AG04450 (cell line): ENCODE measurements at regions of chr6 and their contacts with region 1.

Region 1: DNA sequence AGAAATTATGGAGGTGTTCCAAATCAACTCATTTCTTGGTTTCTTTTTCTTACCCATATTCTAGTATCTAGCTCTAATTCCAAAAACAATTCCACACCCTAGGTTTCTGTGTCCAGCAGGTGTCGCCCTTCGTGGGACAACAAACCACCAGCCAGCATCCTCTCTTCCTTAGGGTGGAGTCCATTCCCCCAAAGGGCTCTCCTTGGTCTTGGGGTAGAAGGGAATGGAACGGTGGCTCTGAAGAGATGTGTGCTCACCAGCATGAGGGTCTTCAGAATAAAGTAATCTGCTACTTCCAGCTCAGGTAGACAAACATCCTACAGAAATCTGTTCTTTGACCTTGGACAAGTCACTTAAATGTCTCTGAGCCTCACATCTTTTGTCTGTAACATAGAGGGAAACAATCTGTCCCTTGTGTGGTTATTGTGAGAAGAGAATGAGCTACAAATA is 7.2 kb downstream of the HLA-DMB start:
- DNase-seq: peak; percentile 56
- H3K4me3 ChIP-seq: no peak overlapping the region
- H3K27ac ChIP-seq: no peak overlapping the region
- H3K27me3 ChIP-seq: peaks cover 25% of the 10 kb centered on the region
- CTCF ChIP-seq: peak; percentile 82

Region 2: GRCh38 chr6:32838114-32838958 is 95.3 kb before region 1 on chr6 and contains the start of gene TAP2:
- CTCF ChIA-PET with region 1: interaction called, 15 read pairs
- POLR2A ChIA-PET with region 1: no interaction called
- DNase-seq: peak; percentile 74
- H3K4me3 ChIP-seq: peak within 1 kb of the TSS; percentile 92
- H3K27ac ChIP-seq: peak within 1 kb of the TSS; percentile 92
- H3K27me3 ChIP-seq: no peaks in the 10 kb centered on the region
- CTCF ChIP-seq: peak; percentile 96
- polyA plus RNA-seq, gene TAP2: 15.3 and 15.4 TPM in 2 replicates

Region 3: GRCh38 chr6:32885698-32886286 is 47.9 kb before region 1 on chr6:
- CTCF ChIA-PET with region 1: interaction called, 31 read pairs
- POLR2A ChIA-PET with region 1: no interaction called
- DNase-seq: no peak
- H3K4me3 ChIP-seq: no peak overlapping the region
- H3K27ac ChIP-seq: no peak overlapping the region
- H3K27me3 ChIP-seq: peaks cover 2% of the 10 kb centered on the region
- CTCF ChIP-seq: peak; percentile 63

Region 4: DNA sequence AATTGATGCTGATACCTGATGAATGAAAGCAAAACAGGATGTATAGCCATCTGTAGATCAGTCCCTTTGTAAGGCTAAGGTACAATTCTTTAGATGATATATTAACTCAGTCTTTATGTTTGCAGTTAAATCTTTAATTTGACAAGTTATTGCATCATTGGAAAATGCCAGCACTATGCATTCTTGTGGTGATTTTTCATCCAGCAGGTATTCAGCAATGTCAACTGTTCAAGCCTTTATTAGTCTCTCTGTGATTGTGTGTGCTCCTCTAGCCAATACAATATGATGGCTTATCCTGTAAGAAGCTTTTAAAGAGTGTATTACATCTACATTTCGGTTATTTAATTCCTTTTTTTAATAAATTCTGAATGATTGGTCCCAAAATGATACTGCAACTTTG is 27.1 kb before region 1 on chr6:
- CTCF ChIA-PET with region 1: interaction called, 26 read pairs
- POLR2A ChIA-PET with region 1: no interaction called
- DNase-seq: no peak
- H3K4me3 ChIP-seq: no peak overlapping the region
- H3K27ac ChIP-seq: no peak overlapping the region
- H3K27me3 ChIP-seq: no peaks in the 10 kb centered on the region
- CTCF ChIP-seq: no peak

Region 5: GRCh38 chr6:32920715-32921114 is 12.9 kb before region 1 on chr6:
- CTCF ChIA-PET with region 1: interaction called, 23 read pairs
- POLR2A ChIA-PET with region 1: no interaction called
- DNase-seq: no peak
- H3K4me3 ChIP-seq: no peak overlapping the region
- H3K27ac ChIP-seq: no peak overlapping the region
- H3K27me3 ChIP-seq: peaks cover 18% of the 10 kb centered on the region
- CTCF ChIP-seq: no peak

Region 6: GRCh38 chr6:32952817-32953739 is 19.4 kb after region 1 on chr6 and contains the start of gene HLA-DMA:
- CTCF ChIA-PET with region 1: interaction called, 144 read pairs
- POLR2A ChIA-PET with region 1: interaction called, 12 read pairs
- DNase-seq: peak; percentile 80
- H3K4me3 ChIP-seq: peak within 1 kb of the TSS; percentile 29
- H3K27ac ChIP-seq: no peak within 1 kb of the TSS
- H3K27me3 ChIP-seq: no peaks in the 10 kb centered on the region
- CTCF ChIP-seq: peak; percentile 82
- polyA plus RNA-seq, gene HLA-DMA: 7.1 and 8.2 TPM in 2 replicates

Region 7: DNA sequence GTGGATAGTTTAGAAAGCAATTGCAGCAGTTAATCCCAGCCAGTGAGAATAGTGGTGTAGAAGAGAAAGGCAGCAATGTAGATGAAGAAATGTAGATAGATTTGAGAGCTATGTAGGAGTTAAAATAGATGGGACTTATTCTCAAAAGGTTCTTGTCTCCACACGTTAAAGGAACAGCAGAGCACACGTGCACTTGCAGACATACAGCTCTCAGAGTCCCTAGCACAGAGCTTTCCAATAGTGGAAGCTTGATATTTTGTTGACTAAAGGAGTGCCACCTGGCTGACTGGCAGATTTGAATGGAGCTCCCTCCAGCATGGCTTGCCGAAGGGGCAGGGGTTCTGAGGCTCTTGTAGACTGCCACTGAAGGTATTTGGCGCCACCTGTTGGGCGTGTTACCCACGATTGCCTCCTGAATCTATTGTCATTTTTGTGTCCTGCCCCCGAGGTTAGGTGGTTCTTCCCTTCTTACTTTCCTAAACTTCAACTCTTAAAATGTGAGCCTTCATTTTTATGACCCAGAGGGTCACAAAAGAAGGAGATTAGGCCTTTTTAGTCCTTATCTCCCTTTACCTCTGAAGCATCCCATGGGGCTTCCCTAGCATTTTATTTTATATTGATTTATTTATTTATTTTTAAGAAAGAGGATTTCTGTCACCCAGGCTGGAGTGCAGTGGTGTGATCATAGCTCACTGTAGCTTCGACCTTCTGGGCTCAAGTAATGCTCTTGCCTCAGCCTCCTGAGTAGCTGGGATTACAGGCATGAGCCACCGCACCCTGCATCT is 51.1 kb after region 1 on chr6:
- CTCF ChIA-PET with region 1: interaction called, 252 read pairs
- POLR2A ChIA-PET with region 1: interaction called, 5 read pairs
- DNase-seq: peak; percentile 63
- H3K4me3 ChIP-seq: no peak overlapping the region
- H3K27ac ChIP-seq: no peak overlapping the region
- H3K27me3 ChIP-seq: peaks cover 3% of the 10 kb centered on the region
- CTCF ChIP-seq: peak; percentile 92

Region 8: GRCh38 chr6:33172688-33173534 is 239.2 kb after region 1 on chr6:
- CTCF ChIA-PET with region 1: no interaction called
- POLR2A ChIA-PET with region 1: no interaction called
- DNase-seq: no peak
- H3K4me3 ChIP-seq: no peak overlapping the region
- H3K27ac ChIP-seq: no peak overlapping the region
- H3K27me3 ChIP-seq: peaks cover 19% of the 10 kb centered on the region
- CTCF ChIP-seq: peak; percentile 78